SK-N-SH (cell line): ENCODE measurements at regions of chr1 and their contacts with region 1.

Region 1: GRCh38 chr1:84944767-84945486 is 51.9 kb upstream of the LPAR3 start:
- DNase-seq: peak; percentile 63
- H3K4me3 ChIP-seq: peak overlapping the region; percentile 41 to 48
- H3K27ac ChIP-seq: no peak overlapping the region; a peak in 1 of 4 replicates
- H3K4me1 ChIP-seq: no peaks in the 10 kb centered on the region; a peak in 2 of 4 replicates
- H3K27me3 ChIP-seq: peaks cover 7% of the 10 kb centered on the region
- CTCF ChIP-seq: peak; percentile 98
- EP300 ChIP-seq: no peak
- RAD21 ChIP-seq: peak; percentile 67

Region 2: GRCh38 chr1:84772428-84772943 is 172.4 kb before region 1 on chr1:
- CTCF ChIA-PET with region 1: interaction called, 13 read pairs
- POLR2A ChIA-PET with region 1: no interaction called
- DNase-seq: peak; percentile 78
- H3K4me3 ChIP-seq: no peak overlapping the region; a peak in 1 of 4 replicates
- H3K27ac ChIP-seq: no peak overlapping the region
- H3K4me1 ChIP-seq: peaks cover 0 to 5% of the 10 kb centered on the region in 2 experiments; a peak in 1 of 4 replicates
- H3K27me3 ChIP-seq: no peaks in the 10 kb centered on the region
- CTCF ChIP-seq: peak; percentile 96
- EP300 ChIP-seq: no peak
- RAD21 ChIP-seq: peak; percentile 96

Region 3: GRCh38 chr1:84836145-84836544 is 108.8 kb before region 1 on chr1:
- CTCF ChIA-PET with region 1: no interaction called
- POLR2A ChIA-PET with region 1: no interaction called
- DNase-seq: no peak
- H3K4me3 ChIP-seq: no peak overlapping the region
- H3K27ac ChIP-seq: no peak overlapping the region
- H3K4me1 ChIP-seq: no peaks in the 10 kb centered on the region
- H3K27me3 ChIP-seq: peaks cover 15% of the 10 kb centered on the region; the same call in 1 of the 2 replicates
- CTCF ChIP-seq: no peak
- EP300 ChIP-seq: no peak
- RAD21 ChIP-seq: no peak

Region 4: GRCh38 chr1:84959294-84959693 is 14.4 kb after region 1 on chr1:
- CTCF ChIA-PET with region 1: interaction called, 23 read pairs
- POLR2A ChIA-PET with region 1: no interaction called
- DNase-seq: no peak
- H3K4me3 ChIP-seq: no peak overlapping the region
- H3K27ac ChIP-seq: no peak overlapping the region
- H3K4me1 ChIP-seq: no peaks in the 10 kb centered on the region
- H3K27me3 ChIP-seq: no peaks in the 10 kb centered on the region; the same call in 1 of the 2 replicates
- CTCF ChIP-seq: no peak
- EP300 ChIP-seq: no peak
- RAD21 ChIP-seq: no peak

Region 5: DNA sequence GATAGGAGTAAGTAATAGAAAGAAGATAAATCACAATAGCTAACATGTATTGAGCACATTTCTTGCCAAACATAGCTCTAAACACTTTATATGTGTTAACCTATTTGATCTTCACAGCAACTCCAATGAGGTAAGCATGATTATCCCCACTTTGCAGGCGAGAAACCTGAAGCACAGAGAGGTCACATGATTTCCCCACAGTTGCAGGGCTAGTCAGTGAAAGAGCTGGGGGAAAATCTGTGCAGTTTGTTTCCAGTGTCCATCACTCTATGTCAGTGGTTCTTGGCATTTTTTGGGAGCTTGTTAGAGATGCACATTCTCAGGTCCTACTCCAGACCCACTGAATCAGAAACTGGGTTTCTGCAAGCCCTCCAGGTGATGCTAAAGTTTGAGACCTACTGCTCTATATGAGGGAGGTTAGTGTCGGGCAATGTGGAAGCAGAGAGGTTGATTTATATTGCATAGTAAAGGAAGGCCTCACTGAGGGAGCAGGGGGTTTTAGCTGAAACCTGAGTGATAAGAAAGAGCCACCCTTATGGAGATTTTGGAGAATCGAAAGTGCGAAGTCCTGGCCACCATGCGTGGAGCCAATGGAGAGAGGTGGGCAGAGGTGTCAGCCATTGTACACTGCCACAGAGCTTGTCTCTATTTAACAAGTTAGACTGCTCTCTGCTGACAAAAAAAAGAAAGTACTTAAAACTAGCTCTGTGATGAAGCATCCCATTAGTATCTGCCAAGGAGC is 82.5 kb after region 1 on chr1:
- CTCF ChIA-PET with region 1: interaction called, 27 read pairs
- POLR2A ChIA-PET with region 1: no interaction called
- DNase-seq: no peak
- H3K4me3 ChIP-seq: no peak overlapping the region
- H3K27ac ChIP-seq: no peak overlapping the region
- H3K4me1 ChIP-seq: no peaks in the 10 kb centered on the region
- H3K27me3 ChIP-seq: peaks cover 4% of the 10 kb centered on the region; the same call in 1 of the 2 replicates
- CTCF ChIP-seq: no peak
- EP300 ChIP-seq: no peak
- RAD21 ChIP-seq: peak; percentile 30

Region 6: GRCh38 chr1:85244271-85245061 is 299.5 kb after region 1 on chr1:
- CTCF ChIA-PET with region 1: interaction called, 14 read pairs
- POLR2A ChIA-PET with region 1: no interaction called
- DNase-seq: peak; percentile 21
- H3K4me3 ChIP-seq: no peak overlapping the region
- H3K27ac ChIP-seq: peak overlapping the region in 1 of 2 experiments; percentile 75; a peak in 2 of 4 replicates
- H3K4me1 ChIP-seq: peaks cover 10 to 34% of the 10 kb centered on the region in 2 experiments; a peak in 3 of 4 replicates
- H3K27me3 ChIP-seq: no peaks in the 10 kb centered on the region
- CTCF ChIP-seq: no peak
- EP300 ChIP-seq: no peak
- RAD21 ChIP-seq: no peak